ENCODE measurements at regions of chr9 and their contacts with region 1.

Region 1: GRCh38 chr9:77433675-77434445 is 214.3 kb downstream of the GNA14 start:
- DNase-seq: peak; percentile 70
- H3K4me3 Mint-ChIP-seq: no peak overlapping the region
- H3K27ac Mint-ChIP-seq: no peak overlapping the region
- H3K4me1 Mint-ChIP-seq: peaks cover 3% of the 10 kb centered on the region
- H3K27me3 Mint-ChIP-seq: no peaks in the 10 kb centered on the region

Region 2: DNA sequence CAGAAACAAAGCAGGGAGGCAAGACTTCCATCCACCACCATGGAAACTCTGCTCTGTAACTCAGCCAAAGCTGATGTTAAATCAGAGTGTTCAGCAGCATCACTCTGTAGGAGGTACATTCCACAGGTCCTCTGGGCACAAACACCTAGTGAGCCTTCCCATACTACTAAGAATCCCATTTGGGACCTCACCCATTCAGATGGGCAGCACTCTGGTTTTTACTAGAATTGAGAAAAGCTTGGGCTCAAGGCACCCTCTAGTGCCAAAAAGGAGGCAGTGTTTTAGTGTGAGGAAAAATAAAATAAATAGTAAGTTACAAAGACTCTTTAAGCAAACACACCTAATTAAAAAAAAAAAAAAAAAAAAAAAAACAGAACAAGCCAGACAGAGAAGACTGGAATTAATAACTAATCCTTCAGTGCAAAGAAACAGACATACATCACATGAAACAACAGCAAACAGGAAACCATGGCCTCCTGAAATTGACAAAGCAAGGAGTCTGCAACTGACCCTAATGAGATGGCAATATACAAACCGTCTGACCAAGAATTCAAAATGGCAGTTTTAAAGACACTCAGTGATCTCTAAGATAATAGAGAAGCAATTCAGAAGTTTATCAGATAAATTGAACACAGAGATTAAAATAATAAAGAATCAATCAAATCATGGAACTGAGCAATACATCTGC is 54.7 kb after region 1 on chr9:
- CTCF ChIA-PET with region 1: interaction called, 15 read pairs
- intact Hi-C with region 1: loop called (anchors 1 kb)
- DNase-seq: peak; percentile 12
- H3K4me3 Mint-ChIP-seq: no peak overlapping the region
- H3K27ac Mint-ChIP-seq: no peak overlapping the region
- H3K4me1 Mint-ChIP-seq: peaks cover 11% of the 10 kb centered on the region
- H3K27me3 Mint-ChIP-seq: no peaks in the 10 kb centered on the region

Region 3: DNA sequence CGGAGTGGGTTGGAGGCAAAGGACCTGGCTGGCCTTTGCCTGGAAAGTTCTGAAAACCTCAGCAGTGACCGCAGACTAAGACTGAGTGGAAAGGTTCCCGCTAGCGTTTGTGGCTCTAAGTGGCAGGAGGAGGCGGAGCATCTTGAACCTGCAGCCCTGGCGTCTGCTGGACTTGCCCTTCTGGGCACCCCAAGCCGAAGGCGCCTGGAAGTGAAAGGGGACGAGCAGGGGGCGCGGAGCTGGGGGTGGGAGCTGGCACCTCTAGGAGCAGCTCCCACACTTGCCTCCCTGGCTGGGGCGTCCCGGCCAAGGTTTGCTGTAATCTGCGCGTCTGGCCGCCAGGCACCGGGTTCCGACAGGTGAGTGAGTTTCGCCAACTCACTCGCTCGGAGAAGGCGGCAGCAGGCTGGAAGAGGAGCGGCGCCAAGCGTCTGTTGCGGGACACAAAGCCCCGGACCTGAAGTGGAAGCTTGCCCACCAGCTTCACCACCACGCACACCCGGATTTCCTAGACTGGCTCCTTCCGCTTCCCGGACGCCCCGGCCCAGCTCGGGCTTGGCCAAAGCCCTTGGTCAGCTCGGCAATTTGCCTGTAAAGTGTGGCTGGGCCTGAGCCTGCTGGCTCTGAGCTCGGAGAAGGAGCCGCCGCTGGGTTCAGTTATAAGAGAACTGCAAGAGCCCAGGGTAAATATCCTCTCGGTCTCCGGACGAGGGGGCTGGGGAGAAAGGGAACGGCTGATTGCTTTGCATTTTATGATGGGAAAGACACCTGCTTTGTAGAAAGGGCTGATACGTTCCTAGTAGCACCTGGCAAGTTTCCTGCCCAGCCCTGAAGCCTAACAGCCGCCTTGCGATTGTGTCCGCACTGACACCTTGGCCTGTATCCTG is 214.6 kb after region 1 on chr9 and contains the start of gene GNA14:
- CTCF ChIA-PET with region 1: interaction called, 3 read pairs
- intact Hi-C with region 1: loop called (anchors 1 kb)
- DNase-seq: peak; percentile 34
- H3K4me3 Mint-ChIP-seq: peak within 1 kb of the TSS; percentile 66
- H3K27ac Mint-ChIP-seq: no peak within 1 kb of the TSS
- H3K4me1 Mint-ChIP-seq: peaks cover 10% of the 10 kb centered on the region
- H3K27me3 Mint-ChIP-seq: peaks cover 43% of the 10 kb centered on the region
- total RNA-seq, gene GNA14: not detected

Region 4: DNA sequence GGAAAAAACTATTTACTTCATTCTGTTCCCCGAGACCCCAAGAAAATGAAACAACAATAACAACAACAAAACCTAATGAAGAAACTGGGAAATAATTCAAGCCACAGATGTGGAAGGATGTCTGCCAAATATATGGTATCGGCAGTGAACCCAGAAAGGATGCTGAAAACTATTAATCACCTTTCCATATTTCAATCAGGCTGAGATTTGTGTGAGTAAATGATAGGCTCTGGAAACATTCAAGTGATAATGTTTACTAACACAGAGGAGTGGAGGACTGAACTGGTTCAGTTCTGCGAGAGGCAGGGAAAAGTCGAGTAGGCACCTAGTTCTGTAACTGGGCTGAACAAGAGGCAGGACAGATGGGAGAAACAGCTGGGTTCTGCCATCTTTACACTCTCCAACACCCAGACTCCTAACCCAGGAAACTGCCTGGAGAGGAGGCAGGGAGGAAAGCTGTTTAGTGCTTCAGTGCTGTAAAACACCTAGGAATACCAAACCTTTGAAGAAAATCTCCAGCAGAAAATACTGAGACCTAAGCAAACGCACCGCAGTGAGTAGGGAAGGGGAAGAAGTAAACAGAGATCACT is 311.1 kb after region 1 on chr9:
- CTCF ChIA-PET with region 1: interaction called, 5 read pairs
- intact Hi-C with region 1: loop called (anchors 1 kb)
- DNase-seq: no peak
- H3K4me3 Mint-ChIP-seq: no peak overlapping the region
- H3K27ac Mint-ChIP-seq: no peak overlapping the region
- H3K4me1 Mint-ChIP-seq: peaks cover 45% of the 10 kb centered on the region
- H3K27me3 Mint-ChIP-seq: no peaks in the 10 kb centered on the region

Region 5: GRCh38 chr9:77751341-77752091 is 317.7 kb after region 1 on chr9:
- CTCF ChIA-PET with region 1: interaction called, 13 read pairs
- intact Hi-C with region 1: loop called (anchors 1 kb)
- DNase-seq: peak; percentile 26
- H3K4me3 Mint-ChIP-seq: no peak overlapping the region
- H3K27ac Mint-ChIP-seq: no peak overlapping the region
- H3K4me1 Mint-ChIP-seq: peaks cover 34% of the 10 kb centered on the region
- H3K27me3 Mint-ChIP-seq: no peaks in the 10 kb centered on the region

Region 6: GRCh38 chr9:77841739-77842386 is 408.0 kb after region 1 on chr9:
- CTCF ChIA-PET with region 1: interaction called, 3 read pairs
- intact Hi-C with region 1: loop called (anchors 2 kb)
- DNase-seq: no peak
- H3K4me3 Mint-ChIP-seq: no peak overlapping the region
- H3K27ac Mint-ChIP-seq: no peak overlapping the region
- H3K4me1 Mint-ChIP-seq: peaks cover 7% of the 10 kb centered on the region
- H3K27me3 Mint-ChIP-seq: no peaks in the 10 kb centered on the region